GM10248 (cell line): ENCODE measurements at regions of chr15 and their contacts with region 1.

Region 1: GRCh38 chr15:29139540-29140459 is 129.8 kb downstream of the NSMCE3 start:
- DNase-seq: peak; percentile 81
- CTCF ChIP-seq: peak; percentile 96

Region 2: DNA sequence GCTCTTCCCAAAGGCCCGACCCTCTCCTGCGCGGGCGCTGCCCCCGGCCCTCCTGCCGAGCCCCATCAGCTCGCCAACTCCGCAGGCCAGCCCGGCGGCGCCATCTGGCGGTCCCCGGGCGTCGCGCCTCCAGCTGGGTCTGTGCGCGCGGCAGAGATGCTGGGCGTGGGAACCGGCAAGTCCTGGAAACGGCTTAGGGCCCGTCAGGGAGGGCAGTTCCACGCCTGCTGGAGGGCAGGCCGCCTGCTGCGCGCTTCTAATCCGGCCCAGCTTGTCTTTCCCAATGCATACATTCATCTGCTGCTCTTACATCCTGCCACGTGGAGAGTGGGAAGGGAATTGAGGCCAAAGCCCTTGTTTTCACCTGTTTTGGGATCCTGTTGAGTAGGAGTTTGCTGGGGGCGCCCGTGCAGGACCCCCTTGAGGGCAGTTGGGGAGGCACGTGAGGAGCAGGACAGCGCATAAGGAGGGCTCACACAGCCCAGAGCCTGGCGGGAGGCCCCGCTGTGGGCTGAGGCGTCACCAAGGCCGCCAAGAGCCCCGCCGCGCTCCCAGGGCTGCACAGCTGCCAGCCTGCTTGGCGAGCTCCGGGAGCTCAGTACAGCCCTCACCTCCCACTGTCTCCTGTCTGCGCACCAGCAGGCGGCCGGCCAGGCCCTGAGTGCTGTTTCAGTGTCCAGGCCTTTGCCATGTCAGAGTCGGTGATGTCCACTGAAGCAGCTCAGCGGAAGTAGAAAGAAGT is 35.8 kb before region 1 on chr15:
- CTCF ChIA-PET with region 1: interaction called, 10 read pairs
- POLR2A ChIA-PET with region 1: no interaction called
- DNase-seq: peak; percentile 80
- CTCF ChIP-seq: peak; percentile 88

Region 3: GRCh38 chr15:29122506-29122905 is 17.3 kb before region 1 on chr15:
- CTCF ChIA-PET with region 1: interaction called, 13 read pairs
- POLR2A ChIA-PET with region 1: no interaction called
- DNase-seq: no peak
- CTCF ChIP-seq: no peak

Region 4: DNA sequence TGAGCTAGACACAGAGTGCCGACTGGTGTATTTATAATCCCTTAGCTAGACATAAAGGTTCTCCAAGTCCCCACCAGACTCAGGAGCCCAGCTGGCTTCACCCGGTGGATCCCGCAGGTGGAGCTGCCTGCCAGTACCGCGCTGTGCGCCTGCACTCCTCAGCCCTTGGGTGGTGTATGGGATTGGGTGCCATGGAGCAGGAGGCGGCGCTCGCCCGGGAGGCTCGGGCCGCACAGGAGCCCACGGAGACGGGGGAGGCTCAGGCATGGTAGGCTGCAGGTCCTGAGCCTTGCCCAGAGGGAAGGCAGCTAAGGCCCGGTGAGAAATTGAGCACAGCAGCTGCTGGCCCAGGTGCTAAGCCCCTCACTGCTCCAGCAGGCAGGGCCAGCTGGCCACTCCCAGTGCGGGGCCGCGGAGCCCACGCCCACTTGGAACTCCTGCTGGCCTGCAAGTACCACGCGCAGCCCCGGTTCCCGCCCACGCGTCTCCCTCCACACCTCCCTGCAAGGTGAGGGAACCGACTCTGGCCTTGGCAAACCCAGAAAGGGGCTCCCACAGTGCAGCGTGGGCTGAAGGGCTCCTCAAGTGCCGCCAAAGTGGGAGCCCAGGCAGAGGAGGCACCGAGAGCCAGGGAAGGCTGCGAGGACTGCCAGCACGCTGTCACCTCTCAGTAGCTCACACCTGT is 20.1 kb after region 1 on chr15:
- CTCF ChIA-PET with region 1: interaction called, 14 read pairs
- POLR2A ChIA-PET with region 1: no interaction called
- DNase-seq: no peak
- CTCF ChIP-seq: no peak

Region 5: GRCh38 chr15:29170521-29170920 is 30.7 kb after region 1 on chr15:
- CTCF ChIA-PET with region 1: no interaction called
- POLR2A ChIA-PET with region 1: no interaction called
- DNase-seq: no peak
- CTCF ChIP-seq: no peak

Region 6: DNA sequence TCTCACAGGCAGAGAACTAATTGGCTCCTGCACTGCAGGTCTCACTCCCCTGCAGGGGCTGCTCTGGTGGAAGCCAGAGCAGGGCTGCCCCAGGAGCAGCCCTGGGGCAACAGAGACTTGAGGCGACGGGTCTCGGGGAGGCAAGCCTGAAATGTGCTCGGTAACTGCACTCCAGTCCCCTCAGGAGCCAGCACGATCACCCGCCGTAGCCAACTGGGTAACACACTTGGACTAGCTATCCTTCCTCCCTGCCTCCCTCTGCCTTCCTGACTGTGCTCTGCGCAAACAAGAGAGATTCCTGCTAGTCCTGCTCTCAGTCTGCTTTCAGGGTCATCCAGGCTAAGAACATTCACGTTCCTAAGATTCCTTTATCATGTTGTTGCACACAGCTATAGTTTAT is 270.5 kb after region 1 on chr15:
- CTCF ChIA-PET with region 1: no interaction called
- POLR2A ChIA-PET with region 1: no interaction called
- DNase-seq: no peak
- CTCF ChIP-seq: no peak